Sigmoid colon (tissue), 7 donors: ENCODE measurements at regions of chr21 and their contacts with region 1.

Region 1: DNA sequence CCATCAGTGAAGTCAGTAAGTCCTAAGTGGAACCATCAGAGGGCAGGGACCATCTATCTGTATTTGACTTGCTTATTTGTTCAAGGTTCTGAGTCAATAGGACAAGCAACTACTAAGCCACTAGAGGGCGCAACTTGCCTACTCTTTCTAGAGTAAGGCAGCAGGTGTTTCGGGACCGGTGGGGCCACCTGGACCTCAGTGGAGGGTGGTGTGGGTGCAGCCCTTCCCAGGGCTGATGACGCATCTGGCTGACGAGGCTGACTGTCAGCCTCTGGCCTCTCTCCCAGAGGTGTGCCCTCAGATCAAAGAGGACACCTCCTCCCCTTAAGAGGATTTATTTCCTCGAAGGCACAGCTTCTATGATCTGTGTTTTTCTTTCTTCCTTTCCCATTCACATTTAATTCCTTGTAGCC is 6.6 kb downstream of the CBR3 start:
- DNase-seq: peak; percentile 88
- H3K4me3 ChIP-seq: no peak overlapping the region
- H3K27ac ChIP-seq: no peak overlapping the region
- H3K4me1 ChIP-seq: peaks cover 0 to 3% (median under 1%) of the 10 kb centered on the region in 4 donors
- H3K27me3 ChIP-seq: no peaks in the 10 kb centered on the region
- CTCF ChIP-seq: peak; percentile 57 to 85 (median 78)
- EP300 ChIP-seq: no peak
- POLR2A ChIP-seq: peak in 1 of 2 donors; percentile 16

Region 2: GRCh38 chr21:36209626-36210171 is 68.2 kb after region 1 on chr21:
- intact Hi-C with region 1: loop called (anchors 5 kb)
- DNase-seq: no peak
- H3K4me3 ChIP-seq: no peak overlapping the region
- H3K27ac ChIP-seq: no peak overlapping the region
- H3K4me1 ChIP-seq: peaks cover 0 to 5% (median 0%) of the 10 kb centered on the region in 4 donors
- H3K27me3 ChIP-seq: no peaks in the 10 kb centered on the region
- CTCF ChIP-seq: peak; percentile 19 to 48 (median 38)
- EP300 ChIP-seq: no peak
- POLR2A ChIP-seq: no peak

Region 3: GRCh38 chr21:36260030-36260787 is 118.7 kb after region 1 on chr21:
- intact Hi-C with region 1: loop called (anchors 5 kb)
- DNase-seq: no peak
- H3K4me3 ChIP-seq: peak overlapping the region; percentile 36 to 54 (median 46)
- H3K27ac ChIP-seq: peak overlapping the region; percentile 69 to 83 (median 79)
- H3K4me1 ChIP-seq: peaks cover 0 to 8% (median 5%) of the 10 kb centered on the region in 4 donors
- H3K27me3 ChIP-seq: no peaks in the 10 kb centered on the region
- CTCF ChIP-seq: peak; percentile 51 to 77 (median 72)
- EP300 ChIP-seq: no peak
- POLR2A ChIP-seq: no peak